ENCODE measurements at regions of chr18 and their contacts with region 1.

Region 1: GRCh38 chr18:4813708-4814107 is 358.6 kb upstream of the DLGAP1 start:
- DNase-seq: no peak
- ATAC-seq: no peak
- H3K4me3 ChIP-seq: no peak overlapping the region
- H3K4me3 Mint-ChIP-seq: no peak overlapping the region
- H3K27ac ChIP-seq: no peak overlapping the region
- H3K27ac Mint-ChIP-seq: no peak overlapping the region
- H3K4me1 ChIP-seq: no peaks in the 10 kb centered on the region
- H3K4me1 Mint-ChIP-seq: no peaks in the 10 kb centered on the region
- H3K27me3 ChIP-seq: no peaks in the 10 kb centered on the region
- H3K27me3 Mint-ChIP-seq: no peaks in the 10 kb centered on the region
- CTCF ChIP-seq: no peak

Region 2: GRCh38 chr18:4658804-4659203 is 154.9 kb before region 1 on chr18:
- CTCF ChIA-PET with region 1: no interaction called
- POLR2A ChIA-PET with region 1: no interaction called
- intact Hi-C with region 1: no loop called
- DNase-seq: no peak
- ATAC-seq: no peak
- H3K4me3 ChIP-seq: no peak overlapping the region
- H3K4me3 Mint-ChIP-seq: no peak overlapping the region
- H3K27ac ChIP-seq: no peak overlapping the region
- H3K27ac Mint-ChIP-seq: no peak overlapping the region
- H3K4me1 ChIP-seq: no peaks in the 10 kb centered on the region
- H3K4me1 Mint-ChIP-seq: no peaks in the 10 kb centered on the region
- H3K27me3 ChIP-seq: no peaks in the 10 kb centered on the region
- H3K27me3 Mint-ChIP-seq: no peaks in the 10 kb centered on the region
- CTCF ChIP-seq: no peak

Region 3: GRCh38 chr18:4781873-4782272 is 31.8 kb before region 1 on chr18:
- CTCF ChIA-PET with region 1: no interaction called
- POLR2A ChIA-PET with region 1: no interaction called
- intact Hi-C with region 1: loop called in 1 of 2 experiments (anchors 5 kb)
- DNase-seq: no peak
- ATAC-seq: no peak
- H3K4me3 ChIP-seq: no peak overlapping the region
- H3K4me3 Mint-ChIP-seq: no peak overlapping the region
- H3K27ac ChIP-seq: no peak overlapping the region
- H3K27ac Mint-ChIP-seq: no peak overlapping the region
- H3K4me1 ChIP-seq: no peaks in the 10 kb centered on the region
- H3K4me1 Mint-ChIP-seq: no peaks in the 10 kb centered on the region
- H3K27me3 ChIP-seq: no peaks in the 10 kb centered on the region
- H3K27me3 Mint-ChIP-seq: no peaks in the 10 kb centered on the region
- CTCF ChIP-seq: no peak

Measured in CD8-positive, alpha-beta T cell (primary cell).